Esophagus muscularis mucosa (tissue), 4 donors: ENCODE measurements at regions of chr17 and their contacts with region 1.

Region 1: DNA sequence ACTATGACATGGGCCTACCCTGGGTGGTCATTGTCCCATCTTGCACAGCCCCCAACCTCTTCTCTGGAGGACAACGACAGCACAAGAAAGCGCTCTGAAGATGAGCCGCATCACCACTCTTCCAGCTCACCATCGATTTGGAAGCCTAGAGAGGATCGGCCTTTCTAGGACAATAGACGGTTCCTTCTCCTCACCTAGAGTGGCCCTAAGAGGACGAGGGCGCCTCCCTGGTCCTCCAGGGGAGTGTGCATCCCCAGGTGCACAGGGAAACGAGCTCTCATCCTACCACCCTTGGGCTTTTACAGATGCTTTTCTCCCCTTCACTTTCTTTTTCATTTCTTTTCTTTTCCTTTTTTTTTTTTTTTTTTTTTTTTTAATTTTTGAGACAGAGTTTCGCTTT is 20.3 kb upstream of the SLC52A1 start:
- DNase-seq: no peak
- H3K4me3 ChIP-seq: no peak overlapping the region
- H3K27ac ChIP-seq: no peak overlapping the region
- H3K4me1 ChIP-seq: no peaks in the 10 kb centered on the region
- H3K27me3 ChIP-seq: peaks cover 0 to 19% (median 0%) of the 10 kb centered on the region in 4 donors
- CTCF ChIP-seq: no peak
- EP300 ChIP-seq: no peak
- POLR2A ChIP-seq: no peak

Region 2: GRCh38 chr17:4908301-4908700 is 147.2 kb before region 1 on chr17:
- intact Hi-C with region 1: loop called (anchors 5 kb)
- DNase-seq: no peak
- H3K4me3 ChIP-seq: no peak overlapping the region
- H3K27ac ChIP-seq: peak overlapping the region in 2 of 4 donors; percentile 62
- H3K4me1 ChIP-seq: peaks cover 5 to 19% (median 12%) of the 10 kb centered on the region in 4 donors
- H3K27me3 ChIP-seq: peaks cover 0 to 19% (median 3%) of the 10 kb centered on the region in 4 donors
- CTCF ChIP-seq: no peak
- EP300 ChIP-seq: no peak
- POLR2A ChIP-seq: no peak

Region 3: GRCh38 chr17:5023588-5024147 is 31.9 kb before region 1 on chr17:
- intact Hi-C with region 1: loop called (anchors 5 kb)
- DNase-seq: no peak
- H3K4me3 ChIP-seq: no peak overlapping the region
- H3K27ac ChIP-seq: no peak overlapping the region
- H3K4me1 ChIP-seq: no peaks in the 10 kb centered on the region
- H3K27me3 ChIP-seq: no peaks in the 10 kb centered on the region
- CTCF ChIP-seq: no peak
- EP300 ChIP-seq: no peak
- POLR2A ChIP-seq: no peak

Region 4: GRCh38 chr17:5110816-5111215 is 55.3 kb after region 1 on chr17:
- intact Hi-C with region 1: no loop called
- DNase-seq: no peak
- H3K4me3 ChIP-seq: peak overlapping the region; percentile 72 to 79 (median 76)
- H3K27ac ChIP-seq: peak overlapping the region in 2 of 4 donors; percentile 80 to 82
- H3K4me1 ChIP-seq: peaks cover 7 to 27% (median 23%) of the 10 kb centered on the region in 4 donors
- H3K27me3 ChIP-seq: peaks cover 3 to 16% (median 7%) of the 10 kb centered on the region in 4 donors
- CTCF ChIP-seq: no peak
- EP300 ChIP-seq: no peak
- POLR2A ChIP-seq: no peak